ENCODE measurements at regions of chr16 and their contacts with region 1.

Region 1: DNA sequence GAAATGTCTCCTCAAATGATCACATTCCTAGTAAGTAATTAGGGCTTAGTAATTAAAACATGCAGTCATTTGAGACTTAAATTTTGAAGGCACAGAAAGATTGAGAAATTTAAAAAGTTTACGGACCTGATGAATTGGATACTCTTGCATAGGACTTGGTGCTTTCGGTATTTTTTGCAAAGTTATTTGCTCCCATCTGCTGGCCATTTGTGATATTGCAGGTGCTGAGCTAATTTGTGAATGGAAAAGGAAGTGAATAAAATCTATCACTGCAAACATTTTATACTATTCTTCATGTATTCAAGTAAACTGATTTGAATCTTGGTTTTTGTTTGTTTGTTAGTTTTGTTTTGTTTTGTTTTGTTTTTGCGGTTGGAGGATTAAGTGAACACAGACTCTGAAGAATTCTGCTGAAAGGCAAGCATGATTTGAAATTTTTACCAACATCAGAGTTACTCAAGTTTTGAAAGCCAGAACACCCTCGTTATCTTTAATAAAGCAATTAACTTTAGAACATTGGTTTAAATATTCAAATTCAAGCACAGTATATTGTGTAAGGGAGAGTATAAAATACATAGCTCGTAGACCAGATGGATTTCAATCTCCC is 689.5 kb upstream of the RBFOX1 start:
- DNase-seq: peak; percentile 48
- ATAC-seq: peak; percentile 80
- H3K4me3 ChIP-seq: no peak overlapping the region
- H3K27ac ChIP-seq: no peak overlapping the region
- H3K4me1 ChIP-seq: no peaks in the 10 kb centered on the region
- H3K27me3 ChIP-seq: no peaks in the 10 kb centered on the region
- CTCF ChIP-seq: peak; percentile 76
- POLR2A ChIP-seq: no peak
- RAD21 ChIP-seq: peak; percentile 75

Region 2: GRCh38 chr16:5234295-5235050 is 1408.7 kb before region 1 on chr16:
- CTCF ChIA-PET with region 1: interaction called, 3 read pairs
- POLR2A ChIA-PET with region 1: no interaction called
- dilution Hi-C with region 1: no loop called
- in situ Hi-C with region 1: loop called (anchors 10 kb)
- intact Hi-C with region 1: loop called (anchors 2 kb)
- DNase-seq: no peak
- ATAC-seq: no peak
- H3K4me3 ChIP-seq: no peak overlapping the region
- H3K27ac ChIP-seq: no peak overlapping the region
- H3K4me1 ChIP-seq: no peaks in the 10 kb centered on the region
- H3K27me3 ChIP-seq: no peaks in the 10 kb centered on the region
- CTCF ChIP-seq: no peak
- POLR2A ChIP-seq: no peak
- RAD21 ChIP-seq: no peak